PC-3 (cell line): ENCODE measurements at regions of chr6 and their contacts with region 1.

Region 1: DNA sequence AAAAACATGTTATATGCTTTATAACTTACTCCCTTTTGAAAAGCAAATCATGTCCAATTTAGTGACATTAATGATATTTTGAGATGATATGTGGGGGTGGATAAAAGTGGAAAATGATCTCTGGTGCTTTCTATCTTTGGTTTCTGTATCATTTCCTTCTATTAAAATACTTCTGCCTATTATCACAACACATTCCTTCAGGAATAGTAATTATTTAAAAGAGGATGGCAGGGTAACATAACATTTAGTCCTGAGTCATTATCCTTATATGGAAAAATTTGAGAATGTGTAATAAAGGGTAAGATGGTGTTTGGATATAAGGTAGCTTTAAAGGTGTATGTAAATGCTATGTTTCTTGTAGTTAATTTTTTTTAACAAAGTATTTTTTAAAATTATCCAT is 657.7 kb downstream of the PHF3 start:
- DNase-seq: peak; percentile 68
- ATAC-seq: peak; percentile 54
- H3K4me3 ChIP-seq: peak overlapping the region; percentile 52
- H3K27ac ChIP-seq: peak overlapping the region; percentile 87
- H3K4me1 ChIP-seq: peaks cover 52% of the 10 kb centered on the region
- H3K27me3 ChIP-seq: no peaks in the 10 kb centered on the region
- CTCF ChIP-seq: no peak

Region 2: GRCh38 chr6:64084185-64084663 is 209.1 kb before region 1 on chr6:
- CTCF ChIA-PET with region 1: no interaction called
- POLR2A ChIA-PET with region 1: no interaction called
- intact Hi-C with region 1: loop called (anchors 10 kb)
- DNase-seq: peak; percentile 49
- ATAC-seq: peak; percentile 90
- H3K4me3 ChIP-seq: no peak overlapping the region
- H3K27ac ChIP-seq: peak overlapping the region; percentile 60
- H3K4me1 ChIP-seq: peaks cover 11% of the 10 kb centered on the region
- H3K27me3 ChIP-seq: no peaks in the 10 kb centered on the region
- CTCF ChIP-seq: no peak

Region 3: GRCh38 chr6:64330694-64331307 is 37.5 kb after region 1 on chr6:
- CTCF ChIA-PET with region 1: interaction called, 7 read pairs
- POLR2A ChIA-PET with region 1: no interaction called
- intact Hi-C with region 1: loop called (anchors 2 kb)
- DNase-seq: peak; percentile 86
- ATAC-seq: peak; percentile 80
- H3K4me3 ChIP-seq: no peak overlapping the region
- H3K27ac ChIP-seq: no peak overlapping the region
- H3K4me1 ChIP-seq: no peaks in the 10 kb centered on the region
- H3K27me3 ChIP-seq: no peaks in the 10 kb centered on the region
- CTCF ChIP-seq: peak; percentile 74

Region 4: DNA sequence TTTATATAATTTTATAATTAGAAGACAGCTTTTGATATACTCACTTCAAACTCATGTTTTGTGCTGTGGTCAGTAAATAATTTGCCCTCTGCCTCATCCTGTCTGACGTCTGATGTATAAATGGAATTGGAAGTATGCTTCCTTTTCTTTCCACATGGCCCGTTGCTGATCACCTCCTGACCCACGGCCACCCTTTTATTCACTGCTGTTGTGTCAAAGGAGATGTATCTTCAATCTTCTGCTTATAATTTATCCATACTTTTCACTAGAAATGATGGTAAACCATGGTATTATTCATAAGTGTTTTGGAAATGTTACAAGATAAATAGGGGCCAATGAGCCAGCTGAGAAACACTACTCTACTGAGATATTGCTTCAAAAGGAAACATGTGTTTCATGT is 184.1 kb after region 1 on chr6:
- CTCF ChIA-PET with region 1: no interaction called
- POLR2A ChIA-PET with region 1: no interaction called
- intact Hi-C with region 1: loop called (anchors 5 kb)
- DNase-seq: no peak
- ATAC-seq: no peak
- H3K4me3 ChIP-seq: no peak overlapping the region
- H3K27ac ChIP-seq: no peak overlapping the region
- H3K4me1 ChIP-seq: no peaks in the 10 kb centered on the region
- H3K27me3 ChIP-seq: no peaks in the 10 kb centered on the region
- CTCF ChIP-seq: no peak

Region 5: DNA sequence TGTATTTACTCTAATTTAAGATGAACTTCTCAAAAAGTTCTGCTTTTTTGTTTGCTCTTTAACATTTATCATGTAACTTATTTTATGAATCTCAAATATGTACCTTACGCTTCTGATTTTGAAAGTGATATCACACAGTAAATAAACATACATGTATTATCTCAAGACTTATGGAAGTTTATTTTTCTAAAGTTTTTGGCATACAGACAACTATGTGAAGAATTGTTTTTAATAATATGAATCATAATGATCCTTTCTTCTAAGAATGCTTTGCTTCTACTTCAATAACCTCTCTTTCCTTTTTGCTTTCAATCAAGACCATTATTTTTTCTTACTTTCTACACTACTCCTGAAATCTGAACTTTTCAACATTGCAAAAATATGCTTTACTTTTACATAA is 597.3 kb after region 1 on chr6:
- CTCF ChIA-PET with region 1: no interaction called
- POLR2A ChIA-PET with region 1: no interaction called
- intact Hi-C with region 1: loop called (anchors 10 kb)
- DNase-seq: peak; percentile 73
- ATAC-seq: peak; percentile 80
- H3K4me3 ChIP-seq: peak overlapping the region; percentile 22
- H3K27ac ChIP-seq: no peak overlapping the region
- H3K4me1 ChIP-seq: peaks cover 10% of the 10 kb centered on the region
- H3K27me3 ChIP-seq: no peaks in the 10 kb centered on the region
- CTCF ChIP-seq: no peak